Activated naive CD4-positive, alpha-beta T cell treated with anti-CD3 and anti-CD28 coated beads for 36 hours (primary cell): ENCODE measurements at regions of chr9 and their contacts with region 1.

Region 1: DNA sequence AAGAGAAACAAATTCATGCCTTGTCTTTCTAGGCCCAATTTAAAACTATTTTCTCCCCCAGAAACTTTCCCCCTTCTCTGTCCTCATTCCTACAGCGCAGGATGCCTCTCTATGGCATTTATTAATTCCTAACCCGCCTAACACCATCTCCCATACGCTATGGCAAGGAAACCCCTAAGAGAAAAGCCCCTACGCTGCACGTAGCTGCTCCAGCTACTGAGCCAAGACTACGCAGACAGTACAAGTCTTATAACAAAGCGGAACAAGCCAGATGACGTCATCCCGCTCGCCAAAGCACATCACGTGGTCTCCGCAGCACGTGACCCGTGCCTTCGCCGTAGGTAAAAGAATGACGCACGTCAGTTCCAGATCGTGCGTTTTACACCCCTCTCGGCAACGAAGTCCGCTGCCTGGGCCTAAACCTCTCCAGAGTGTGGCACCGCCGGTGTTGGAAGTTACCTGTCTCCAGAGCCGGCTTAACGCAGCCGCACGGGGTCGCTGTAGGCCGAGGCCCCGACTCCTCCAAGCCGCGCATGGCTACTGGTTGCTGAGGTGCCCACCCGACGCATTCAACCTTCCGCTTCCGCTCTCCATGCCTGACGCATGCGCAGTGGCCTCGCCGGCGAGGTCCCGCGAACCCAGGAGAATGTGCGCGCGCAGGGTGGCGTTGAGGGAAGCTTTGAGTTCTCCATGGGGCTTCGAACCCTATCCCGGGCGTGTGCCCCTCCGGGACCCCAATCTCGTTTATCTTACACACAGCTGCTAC is at the start of gene TRMO:
- DNase-seq: peak; percentile 98
- H3K4me3 Mint-ChIP-seq: peak within 1 kb of the TSS; percentile 86
- H3K27ac Mint-ChIP-seq: peak within 1 kb of the TSS; percentile 97
- H3K4me1 Mint-ChIP-seq: peaks cover 35% of the 10 kb centered on the region
- H3K27me3 Mint-ChIP-seq: peaks cover 5% of the 10 kb centered on the region
- total RNA-seq, gene TRMO: 10.7 to 10.8 TPM

Region 2: GRCh38 chr9:97710356-97711222 is 211.6 kb before region 1 on chr9:
- CTCF ChIA-PET with region 1: interaction called, 4 read pairs
- intact Hi-C with region 1: loop called (anchors 1 kb)
- DNase-seq: peak; percentile 64
- H3K4me3 Mint-ChIP-seq: no peak overlapping the region
- H3K27ac Mint-ChIP-seq: no peak overlapping the region
- H3K4me1 Mint-ChIP-seq: peaks cover 20% of the 10 kb centered on the region
- H3K27me3 Mint-ChIP-seq: peaks cover 4% of the 10 kb centered on the region

Region 3: DNA sequence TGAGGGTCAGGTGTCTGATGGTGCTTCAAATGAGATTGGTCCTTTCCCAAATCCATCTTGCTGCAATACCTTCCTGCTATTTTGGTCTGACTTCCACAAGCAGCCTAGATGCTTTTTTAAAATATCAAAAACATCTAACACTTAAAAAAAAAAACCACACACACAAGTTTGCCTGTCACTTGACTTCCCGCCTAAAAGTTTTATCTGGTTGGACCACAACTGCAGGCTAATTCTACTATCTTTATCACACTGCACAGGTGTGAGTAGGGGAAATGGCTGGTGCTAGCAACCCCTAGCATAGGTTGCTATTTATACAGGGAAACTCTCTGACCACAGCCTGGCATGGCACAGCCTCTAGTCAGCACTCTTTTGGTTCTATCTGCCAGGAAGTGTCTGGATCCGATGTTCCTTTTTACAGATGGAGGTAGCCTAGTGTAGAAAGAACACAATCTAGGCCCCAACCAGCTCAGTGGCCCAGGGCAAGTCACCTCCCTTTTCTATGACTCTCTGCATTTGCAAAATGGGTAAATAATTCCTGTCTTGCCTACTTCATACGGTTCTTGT is 16.0 kb after region 1 on chr9 and contains the start of gene HEMGN:
- CTCF ChIA-PET with region 1: interaction called, 37 read pairs
- intact Hi-C with region 1: loop called (anchors 1 kb)
- DNase-seq: peak; percentile 72
- H3K4me3 Mint-ChIP-seq: peak within 1 kb of the TSS; percentile 48
- H3K27ac Mint-ChIP-seq: peak within 1 kb of the TSS; percentile 79
- H3K4me1 Mint-ChIP-seq: peaks cover 38% of the 10 kb centered on the region
- H3K27me3 Mint-ChIP-seq: no peaks in the 10 kb centered on the region
- total RNA-seq, gene HEMGN: 1.8 to 1.9 TPM

Region 4: DNA sequence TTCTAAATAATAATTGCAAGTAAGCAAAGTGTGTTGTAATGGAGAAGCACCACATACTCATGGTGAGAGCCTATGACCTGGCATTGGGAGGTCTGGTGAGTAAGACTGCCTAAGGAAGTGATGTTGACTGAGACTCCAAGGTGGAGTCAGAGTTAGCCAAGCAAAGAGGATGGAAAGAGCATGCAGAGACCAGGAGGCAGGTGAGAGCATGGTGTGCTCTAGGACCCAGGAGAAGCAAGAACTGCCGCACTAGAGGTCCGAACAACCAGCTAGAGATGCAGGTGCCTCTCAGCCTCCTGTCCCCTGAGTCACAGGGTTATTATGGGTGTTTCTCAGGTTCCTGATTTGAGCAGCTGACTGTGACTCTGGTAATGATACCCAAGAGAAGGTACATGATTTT is 88.3 kb after region 1 on chr9:
- CTCF ChIA-PET with region 1: interaction called, 10 read pairs
- intact Hi-C with region 1: no loop called
- DNase-seq: peak; percentile 34
- H3K4me3 Mint-ChIP-seq: no peak overlapping the region
- H3K27ac Mint-ChIP-seq: no peak overlapping the region
- H3K4me1 Mint-ChIP-seq: peaks cover 27% of the 10 kb centered on the region
- H3K27me3 Mint-ChIP-seq: no peaks in the 10 kb centered on the region

Region 5: DNA sequence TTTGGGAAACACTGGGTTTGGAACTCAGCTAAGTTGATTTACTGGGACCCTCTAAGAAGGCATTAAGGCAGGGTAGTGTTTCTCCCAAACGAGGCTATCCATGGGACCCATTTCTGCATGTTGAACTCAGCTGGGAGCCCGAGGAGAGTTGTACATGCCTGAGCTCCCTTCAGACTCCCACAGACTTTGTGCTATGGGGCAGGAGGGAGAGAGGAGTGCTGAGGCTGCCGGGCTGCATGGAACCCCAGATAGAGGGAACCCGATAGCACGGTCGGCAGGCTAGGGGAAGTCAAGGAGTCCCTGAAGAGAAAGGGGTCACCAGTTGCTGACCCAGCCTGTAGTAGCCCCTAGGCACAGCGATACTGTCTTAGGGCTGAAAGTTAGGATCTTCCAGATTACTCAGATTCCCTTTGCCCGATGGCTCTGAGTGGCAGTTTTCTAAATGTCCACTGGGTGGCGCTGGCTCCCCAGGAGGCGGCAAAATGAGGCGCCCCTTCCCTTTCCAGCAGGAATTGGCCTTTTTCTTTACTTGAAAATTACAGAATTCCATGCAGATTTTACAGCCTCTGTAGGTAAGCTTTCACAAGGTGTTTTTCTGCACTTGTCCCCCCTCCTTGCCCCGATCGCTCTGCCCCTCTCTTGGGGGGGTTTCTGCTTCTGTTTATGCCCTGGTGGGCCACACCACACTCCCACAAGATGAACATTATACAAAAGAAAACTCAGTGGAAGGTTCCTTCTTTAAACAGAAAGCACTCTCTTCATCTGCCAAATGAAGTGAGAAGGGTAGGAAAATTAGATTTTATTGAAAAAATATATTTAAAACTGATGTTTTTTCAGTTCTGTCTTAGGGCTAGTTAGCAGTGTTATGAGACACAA is 152.2 kb after region 1 on chr9:
- CTCF ChIA-PET with region 1: no interaction called
- intact Hi-C with region 1: loop called (anchors 1 kb)
- DNase-seq: peak; percentile 81
- H3K4me3 Mint-ChIP-seq: peak overlapping the region; percentile 51
- H3K27ac Mint-ChIP-seq: peak overlapping the region; percentile 94
- H3K4me1 Mint-ChIP-seq: peaks cover 34% of the 10 kb centered on the region
- H3K27me3 Mint-ChIP-seq: no peaks in the 10 kb centered on the region

Region 6: DNA sequence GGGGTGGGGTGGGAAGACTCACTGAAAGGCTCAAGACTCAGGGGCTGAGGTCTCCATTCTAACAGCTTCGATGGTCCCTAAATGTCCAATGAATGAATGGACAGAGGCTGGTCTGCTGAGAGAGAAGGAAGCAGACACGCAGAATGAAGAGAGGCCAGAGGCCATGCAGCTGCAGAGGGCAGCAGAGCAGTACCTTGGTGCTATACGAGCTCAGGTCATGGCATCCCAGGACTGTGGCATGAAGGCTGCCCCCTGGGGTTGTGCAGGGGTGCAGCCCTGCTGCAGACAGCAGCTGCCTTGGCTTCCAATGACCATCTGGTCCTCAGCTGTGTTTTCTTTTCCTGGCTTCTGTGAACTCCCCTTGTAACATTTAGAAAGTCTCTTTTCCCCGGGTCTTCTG is 285.5 kb after region 1 on chr9:
- CTCF ChIA-PET with region 1: no interaction called
- intact Hi-C with region 1: loop called (anchors 1 kb)
- DNase-seq: no peak
- H3K4me3 Mint-ChIP-seq: no peak overlapping the region
- H3K27ac Mint-ChIP-seq: no peak overlapping the region
- H3K4me1 Mint-ChIP-seq: peaks cover 2% of the 10 kb centered on the region
- H3K27me3 Mint-ChIP-seq: no peaks in the 10 kb centered on the region